ENCODE measurements at regions of chr15 and their contacts with region 1.

Region 1: GRCh38 chr15:72487070-72487797 is 13.1 kb downstream of the ARIH1 start:
- DNase-seq: no peak
- ATAC-seq: peak in 1 of 8 donors; percentile 45
- H3K4me3 ChIP-seq: no peak overlapping the region
- H3K27ac ChIP-seq: no peak overlapping the region
- H3K4me1 ChIP-seq: peaks cover 2 to 92% (median 70%) of the 10 kb centered on the region in 9 donors
- H3K27me3 ChIP-seq: no peaks in the 10 kb centered on the region
- CTCF ChIP-seq: no peak

Region 2: DNA sequence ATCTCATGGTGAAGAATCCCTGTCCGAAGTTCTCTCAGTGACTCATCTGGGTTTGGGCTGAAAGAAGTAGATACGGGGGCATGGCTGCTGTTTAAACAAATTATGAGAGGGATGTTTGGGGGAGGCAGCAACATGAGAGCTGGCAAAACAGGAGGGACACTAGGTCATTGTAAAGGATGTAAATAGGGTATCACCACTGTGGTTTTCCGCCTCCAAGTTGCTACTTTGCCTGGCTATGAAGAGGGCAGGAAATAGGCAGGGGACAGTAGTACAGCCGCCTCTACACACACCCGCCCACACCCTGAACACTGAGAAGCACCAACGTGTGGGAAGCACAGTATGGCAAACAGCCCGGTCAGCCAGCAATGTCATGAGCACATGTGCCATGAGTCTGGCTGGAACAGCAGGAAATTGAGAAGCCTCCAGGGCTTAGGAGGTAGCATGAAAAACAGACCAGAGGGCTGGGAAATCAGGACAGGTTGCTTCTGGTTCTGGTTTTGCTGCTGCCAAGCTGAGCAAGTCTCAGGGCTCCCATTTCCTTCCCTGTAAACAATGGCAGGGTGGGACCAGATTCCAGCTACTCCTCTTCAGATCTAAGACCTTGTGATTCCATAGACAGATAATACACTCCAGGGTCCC is 128.5 kb before region 1 on chr15:
- intact Hi-C with region 1: no loop called
- DNase-seq: peak; percentile 52 to 55
- ATAC-seq: peak; percentile 77 to 95 (median 91)
- H3K4me3 ChIP-seq: no peak overlapping the region
- H3K27ac ChIP-seq: peak overlapping the region in 9 of 10 donors; percentile 14 to 80 (median 62)
- H3K4me1 ChIP-seq: peaks cover 0 to 53% (median 35%) of the 10 kb centered on the region in 9 donors
- H3K27me3 ChIP-seq: no peaks in the 10 kb centered on the region
- CTCF ChIP-seq: no peak

Region 3: DNA sequence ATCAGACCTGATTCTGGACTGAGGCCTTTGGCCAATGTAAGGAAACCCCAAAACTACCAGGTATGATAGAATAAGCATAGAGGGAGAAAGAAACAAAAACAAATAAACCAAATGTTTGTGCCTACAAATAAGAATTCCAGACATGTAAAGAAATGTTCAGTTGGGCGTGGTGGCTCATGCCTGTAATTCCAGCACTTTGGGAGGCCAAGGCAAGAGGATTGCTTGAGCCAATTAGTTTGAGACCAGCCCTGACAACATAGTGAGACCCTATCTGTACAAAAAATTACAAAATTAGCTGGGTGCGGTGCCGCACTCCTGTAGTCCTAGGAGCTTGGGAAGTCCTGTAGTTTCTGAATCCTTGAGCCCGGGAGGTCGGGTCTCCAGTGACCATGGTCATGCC is 76.1 kb before region 1 on chr15:
- intact Hi-C with region 1: no loop called
- DNase-seq: no peak
- ATAC-seq: no peak
- H3K4me3 ChIP-seq: no peak overlapping the region
- H3K27ac ChIP-seq: no peak overlapping the region
- H3K4me1 ChIP-seq: no peaks in the 10 kb centered on the region
- H3K27me3 ChIP-seq: peaks cover 0 to 36% (median 12%) of the 10 kb centered on the region in 7 donors
- CTCF ChIP-seq: no peak

Region 4: DNA sequence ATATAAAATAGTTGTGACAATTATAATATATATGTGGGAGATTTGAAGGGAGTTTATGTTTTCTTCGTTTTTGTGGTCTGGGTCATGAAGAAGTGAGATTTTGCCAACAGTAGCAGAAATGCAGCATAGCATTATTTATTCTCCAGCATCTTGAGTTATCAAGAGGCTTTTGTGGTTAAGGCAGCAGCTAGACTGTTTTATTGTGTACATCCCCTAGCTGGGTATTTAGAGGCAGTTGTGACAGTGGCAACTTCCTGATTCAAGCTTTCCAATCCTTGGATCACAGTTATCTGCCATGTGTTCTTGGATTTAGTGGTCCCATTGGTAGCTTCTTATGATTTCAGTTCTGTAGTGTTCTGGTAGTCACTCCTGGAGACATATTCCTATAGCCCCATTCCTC is 15.9 kb after region 1 on chr15:
- intact Hi-C with region 1: no loop called
- DNase-seq: no peak
- ATAC-seq: no peak
- H3K4me3 ChIP-seq: no peak overlapping the region
- H3K27ac ChIP-seq: no peak overlapping the region
- H3K4me1 ChIP-seq: peaks cover 0 to 38% (median 24%) of the 10 kb centered on the region in 9 donors
- H3K27me3 ChIP-seq: no peaks in the 10 kb centered on the region
- CTCF ChIP-seq: no peak

Region 5: GRCh38 chr15:72532991-72533601 is 45.9 kb after region 1 on chr15:
- intact Hi-C with region 1: loop called in 1 of 10 experiments (anchors 5 kb)
- DNase-seq: no peak
- ATAC-seq: peak in 1 of 8 donors; percentile 17
- H3K4me3 ChIP-seq: no peak overlapping the region
- H3K27ac ChIP-seq: no peak overlapping the region
- H3K4me1 ChIP-seq: peaks cover 0 to 25% (median 0%) of the 10 kb centered on the region in 9 donors
- H3K27me3 ChIP-seq: no peaks in the 10 kb centered on the region
- CTCF ChIP-seq: peak in 6 of 9 donors; percentile 33 to 59 (median 38)

Region 6: GRCh38 chr15:72545156-72545555 is 57.9 kb after region 1 on chr15:
- intact Hi-C with region 1: loop called in 1 of 10 experiments (anchors 5 kb)
- DNase-seq: no peak
- ATAC-seq: no peak
- H3K4me3 ChIP-seq: no peak overlapping the region
- H3K27ac ChIP-seq: no peak overlapping the region
- H3K4me1 ChIP-seq: peaks cover 0 to 14% (median 0%) of the 10 kb centered on the region in 9 donors
- H3K27me3 ChIP-seq: no peaks in the 10 kb centered on the region
- CTCF ChIP-seq: no peak

Region 7: GRCh38 chr15:72570059-72570458 is 82.8 kb after region 1 on chr15:
- intact Hi-C with region 1: loop called in 1 of 10 experiments (anchors 10 kb)
- DNase-seq: no peak
- ATAC-seq: no peak
- H3K4me3 ChIP-seq: no peak overlapping the region
- H3K27ac ChIP-seq: no peak overlapping the region
- H3K4me1 ChIP-seq: no peaks in the 10 kb centered on the region
- H3K27me3 ChIP-seq: no peaks in the 10 kb centered on the region
- CTCF ChIP-seq: no peak